ENCODE measurements at regions of chr5 and their contacts with region 1.

Region 1: DNA sequence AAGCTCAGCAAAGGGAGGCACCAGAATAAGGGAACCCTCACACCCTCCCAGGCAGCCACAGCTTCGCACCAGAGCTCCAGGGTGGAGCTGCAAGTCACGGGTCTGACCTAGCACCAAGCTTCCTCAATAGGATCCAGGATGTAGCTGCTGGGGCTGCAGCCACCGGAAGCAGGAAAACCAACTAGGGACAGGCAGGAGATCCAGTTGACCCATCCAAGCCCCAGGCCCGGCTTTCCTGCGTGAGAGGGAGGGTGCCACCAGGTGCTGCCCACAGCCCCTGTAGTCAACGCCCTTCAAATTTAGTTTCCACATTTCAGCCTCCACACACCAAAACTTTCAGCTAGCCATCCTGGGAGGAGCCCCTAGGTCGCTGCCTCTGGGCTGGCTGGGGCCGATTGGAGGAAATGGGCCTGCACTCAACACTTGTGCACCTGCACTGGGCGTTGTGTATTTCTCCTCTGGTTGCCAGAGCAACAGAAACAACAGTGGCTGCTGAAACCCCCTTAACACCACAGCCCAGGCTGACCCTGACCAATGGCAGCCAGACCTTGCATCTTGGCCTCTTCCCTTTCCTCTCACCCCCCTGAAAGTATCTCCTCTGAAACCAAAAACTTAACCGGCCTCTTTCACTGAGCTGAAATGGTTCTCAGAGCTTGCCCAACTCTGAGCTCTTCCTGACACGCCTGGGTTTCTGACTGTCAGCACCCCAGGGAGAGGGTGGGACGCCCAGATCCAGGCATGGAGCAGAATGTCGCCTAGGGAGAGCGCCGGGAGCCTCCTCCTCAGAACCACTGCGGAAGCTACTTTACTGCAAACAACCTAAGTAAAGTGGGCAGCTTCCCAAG is 226.5 kb upstream of the MAP3K1 start:
- DNase-seq: peak; percentile 81

Region 2: DNA sequence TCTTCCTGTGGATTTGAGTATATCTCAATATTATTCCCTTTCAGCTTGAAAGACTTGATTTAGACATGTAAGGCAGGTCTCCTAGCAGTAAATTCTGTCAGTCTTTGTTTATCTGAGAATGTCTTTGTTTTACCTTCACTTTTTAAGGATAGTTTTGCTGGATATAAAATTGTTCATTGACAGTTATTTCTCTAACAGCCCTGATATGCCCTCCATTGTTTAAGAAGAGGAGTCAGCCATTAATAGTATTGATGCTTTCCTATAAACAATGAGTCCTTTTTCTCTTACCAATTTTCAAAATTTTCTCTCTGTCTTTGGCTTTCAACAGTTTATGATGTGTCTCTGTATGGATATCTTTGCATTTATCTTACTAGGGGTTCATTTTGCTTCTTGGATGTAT is 192.2 kb before region 1 on chr5:
- intact Hi-C with region 1: no loop called
- DNase-seq: no peak

Region 3: GRCh38 chr5:56696900-56697299 is 108.0 kb after region 1 on chr5:
- intact Hi-C with region 1: loop called (anchors 5 kb)
- DNase-seq: no peak

Region 4: DNA sequence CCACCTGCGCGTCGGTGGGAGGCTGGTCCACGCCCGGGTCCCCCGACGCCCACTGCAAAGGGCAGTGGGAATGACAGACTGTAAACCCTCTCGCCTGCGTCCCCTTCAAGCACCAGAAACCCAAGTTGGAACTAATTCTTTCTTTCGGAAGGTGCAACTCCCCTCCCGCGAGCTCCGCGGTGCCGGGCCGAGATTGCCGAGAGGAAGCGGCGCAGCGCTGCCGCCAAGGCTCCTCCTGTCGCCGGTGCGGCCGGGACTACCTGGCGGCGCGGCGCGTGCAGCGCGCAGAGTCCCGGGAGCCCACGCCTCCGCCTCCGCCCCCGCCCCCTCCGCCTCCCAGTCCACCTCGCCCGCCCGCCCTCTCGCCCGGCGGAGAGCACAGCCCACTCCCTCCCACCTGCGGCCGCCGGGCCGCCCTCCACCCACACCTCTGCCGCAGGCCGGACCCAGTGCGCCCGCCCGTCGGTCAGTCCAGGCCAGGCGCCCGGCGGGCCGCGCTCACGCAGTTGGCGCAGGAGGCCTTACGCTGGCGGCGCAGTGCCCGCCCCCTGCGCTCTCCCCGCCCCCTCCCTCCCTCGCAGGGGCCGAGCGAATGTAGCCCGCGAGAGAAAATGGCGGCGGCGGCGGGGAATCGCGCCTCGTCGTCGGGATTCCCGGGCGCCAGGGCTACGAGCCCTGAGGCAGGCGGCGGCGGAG is 226.3 kb after region 1 on chr5 and contains the start of gene MAP3K1:
- intact Hi-C with region 1: loop called (anchors 5 kb)
- DNase-seq: peak; percentile 90
- total RNA-seq, gene MAP3K1: 6.8 TPM